Ascending aorta (tissue), 2 donors: ENCODE measurements at regions of chr9 and their contacts with region 1.

Region 1: DNA sequence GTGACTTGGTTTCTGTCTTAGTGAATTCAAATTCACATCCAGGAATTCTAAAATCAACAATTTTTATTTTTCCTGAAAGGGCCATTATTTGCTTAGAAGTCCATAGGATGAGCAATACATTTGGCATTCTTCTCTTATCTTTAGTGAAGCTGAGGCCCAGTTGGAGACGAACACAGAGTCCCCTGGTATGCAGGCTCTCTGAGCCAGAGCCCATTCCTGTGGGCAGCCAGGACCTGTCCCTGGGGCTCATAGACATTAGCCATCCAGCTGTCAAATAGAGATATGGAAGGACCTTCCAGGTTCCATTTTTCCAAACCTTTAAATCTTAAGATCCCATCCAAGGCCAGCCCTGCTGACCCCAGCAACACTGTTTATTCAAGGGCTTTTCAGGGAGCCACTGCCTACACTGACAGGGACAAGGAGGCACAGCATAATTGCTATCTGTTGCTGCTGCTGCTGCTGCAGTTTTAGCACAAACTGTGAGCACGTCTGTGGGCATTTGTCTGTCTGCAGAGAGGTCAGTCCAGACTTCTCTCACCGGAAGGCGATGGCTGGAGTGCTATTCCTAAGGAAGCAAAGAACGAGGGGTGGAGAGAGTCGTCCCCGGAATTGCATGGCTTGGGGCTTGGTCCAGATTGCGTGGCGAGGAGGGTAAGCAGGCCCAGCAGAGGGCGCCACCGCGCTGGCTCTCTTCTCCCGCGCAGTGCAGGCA is 639.0 kb downstream of the CCDC171 start:
- DNase-seq: peak in 1 of 2 donors; percentile 83
- H3K4me3 ChIP-seq: peak overlapping the region; percentile 22 to 35
- H3K27ac ChIP-seq: no peak overlapping the region
- H3K4me1 ChIP-seq: peaks cover 0 to 13% of the 10 kb centered on the region in 2 donors
- H3K27me3 ChIP-seq: no peaks in the 10 kb centered on the region
- CTCF ChIP-seq: peak; percentile 68 to 82 (median 81)

Region 2: GRCh38 chr9:16213781-16214515 is 22.1 kb after region 1 on chr9:
- intact Hi-C with region 1: loop called (anchors 2 kb)
- DNase-seq: peak in 1 of 2 donors; percentile 86
- H3K4me3 ChIP-seq: peak overlapping the region in 1 of 2 donors; percentile 39
- H3K27ac ChIP-seq: peak overlapping the region; percentile 42 to 46
- H3K4me1 ChIP-seq: peaks cover 0 to 21% of the 10 kb centered on the region in 2 donors
- H3K27me3 ChIP-seq: no peaks in the 10 kb centered on the region
- CTCF ChIP-seq: no peak

Region 3: DNA sequence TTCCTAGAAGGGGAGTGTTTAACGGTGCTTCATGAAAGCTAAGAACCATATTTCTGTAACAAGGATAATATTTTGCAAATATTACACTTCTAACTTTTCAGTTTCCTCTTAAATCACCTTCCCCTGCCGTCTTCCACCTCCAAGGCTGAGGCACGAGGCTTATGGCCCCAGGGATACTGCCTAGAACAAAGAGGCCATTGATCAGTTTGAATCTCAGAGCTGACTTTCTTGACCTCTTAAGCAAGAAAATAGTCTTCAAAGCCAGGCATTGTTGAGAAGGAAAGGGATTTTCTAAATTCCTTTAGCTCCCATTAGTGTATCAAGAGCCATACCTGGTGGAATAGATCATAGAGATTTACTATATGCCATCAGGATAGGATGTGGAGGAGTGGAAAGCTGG is 112.5 kb after region 1 on chr9:
- intact Hi-C with region 1: no loop called
- DNase-seq: no peak
- H3K4me3 ChIP-seq: no peak overlapping the region
- H3K27ac ChIP-seq: no peak overlapping the region
- H3K4me1 ChIP-seq: no peaks in the 10 kb centered on the region
- H3K27me3 ChIP-seq: no peaks in the 10 kb centered on the region
- CTCF ChIP-seq: no peak

Region 4: DNA sequence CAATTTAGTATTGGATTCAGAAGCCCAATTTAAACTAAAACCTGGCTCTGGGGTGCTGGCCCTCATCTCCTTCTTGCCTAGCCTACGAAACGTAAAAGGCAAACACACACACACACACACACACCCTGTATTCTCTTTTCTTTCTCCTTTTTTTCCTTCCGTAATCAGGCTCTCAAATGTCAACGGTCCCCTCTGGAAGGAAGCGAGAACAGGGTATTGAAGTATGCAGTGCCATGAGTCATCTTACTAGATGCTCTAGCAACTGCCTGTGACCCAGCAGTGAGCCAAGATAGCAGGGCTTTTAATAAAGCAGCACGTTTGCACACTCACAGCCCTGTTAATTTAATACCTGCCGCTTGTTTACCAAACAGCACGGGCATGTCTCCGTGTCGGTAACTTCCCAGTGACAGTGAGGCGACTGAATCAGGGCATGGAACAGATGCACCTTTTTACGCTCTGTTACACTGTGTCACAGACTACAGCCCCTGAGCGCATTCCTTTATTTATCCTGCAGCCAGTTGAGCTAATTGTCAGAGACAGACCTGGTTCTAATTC is 434.8 kb after region 1 on chr9:
- intact Hi-C with region 1: loop called (anchors 5 kb)
- DNase-seq: peak in 1 of 2 donors; percentile 66
- H3K4me3 ChIP-seq: no peak overlapping the region
- H3K27ac ChIP-seq: peak overlapping the region in 1 of 2 donors; percentile 38
- H3K4me1 ChIP-seq: peaks cover 0 to 21% of the 10 kb centered on the region in 2 donors
- H3K27me3 ChIP-seq: no peaks in the 10 kb centered on the region
- CTCF ChIP-seq: no peak